GM12878 (cell line): ENCODE measurements at regions of chr15 and their contacts with region 1.

Region 1: DNA sequence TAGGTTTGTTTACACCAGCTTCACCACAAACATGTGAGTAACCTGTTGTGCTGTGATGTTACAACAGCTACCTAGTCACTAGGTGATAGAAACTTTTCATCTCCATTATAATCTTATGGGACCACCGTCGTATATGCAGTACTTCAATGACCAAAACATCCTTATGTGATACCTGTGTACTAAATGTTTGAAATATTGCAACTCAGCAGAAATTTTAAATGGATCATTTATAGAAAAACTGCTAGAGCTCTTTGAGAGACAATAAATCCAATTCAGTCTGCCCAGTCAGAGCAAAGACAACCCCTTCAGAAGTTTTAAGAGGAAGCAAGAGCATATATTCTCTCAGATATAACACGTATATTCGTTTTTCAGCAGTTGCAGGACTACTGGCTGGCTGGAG is 73.4 kb downstream of the THBS1 start:
- DNase-seq: no peak
- ATAC-seq: no peak
- H3K4me3 ChIP-seq: no peak overlapping the region
- H3K27ac ChIP-seq: no peak overlapping the region
- H3K4me1 ChIP-seq: no peaks in the 10 kb centered on the region
- H3K27me3 ChIP-seq: no peaks in the 10 kb centered on the region; a peak in 1 of 4 replicates
- CTCF ChIP-seq: no peak
- EP300 ChIP-seq: no peak
- POLR2A ChIP-seq: no peak
- RAD21 ChIP-seq: no peak

Region 2: DNA sequence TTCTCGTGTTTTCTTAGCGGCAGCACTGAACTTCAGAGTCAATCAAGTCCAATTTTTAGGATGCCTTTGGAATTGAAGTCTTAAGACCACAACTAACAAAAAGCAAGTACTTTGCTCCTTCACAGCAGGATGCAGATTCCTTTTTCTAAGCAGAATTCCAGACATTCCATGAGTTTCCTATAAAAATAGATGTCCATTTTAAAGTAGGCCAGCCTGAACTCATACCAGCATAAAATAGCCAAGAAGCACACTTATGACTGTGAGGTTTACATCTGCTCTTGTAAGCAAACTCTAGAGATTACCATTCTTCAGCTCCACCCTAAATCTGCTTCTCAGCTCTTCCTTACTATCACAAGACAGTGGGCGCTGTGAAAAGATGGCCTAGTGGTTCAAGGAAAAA is 12.4 kb after region 1 on chr15:
- CTCF ChIA-PET with region 1: interaction called, 7 read pairs
- POLR2A ChIA-PET with region 1: no interaction called
- RAD21 ChIA-PET with region 1: no interaction called
- SMC1A ChIA-PET with region 1: interaction called, 15 read pairs
- in situ Hi-C with region 1: no loop called
- intact Hi-C with region 1: no loop called
- DNase-seq: no peak
- ATAC-seq: no peak
- H3K4me3 ChIP-seq: no peak overlapping the region
- H3K27ac ChIP-seq: no peak overlapping the region
- H3K4me1 ChIP-seq: no peaks in the 10 kb centered on the region
- H3K27me3 ChIP-seq: no peaks in the 10 kb centered on the region
- CTCF ChIP-seq: no peak
- EP300 ChIP-seq: no peak
- POLR2A ChIP-seq: no peak
- RAD21 ChIP-seq: no peak